H1 (cell line): ENCODE measurements at regions of chr10 and their contacts with region 1.

Region 1: DNA sequence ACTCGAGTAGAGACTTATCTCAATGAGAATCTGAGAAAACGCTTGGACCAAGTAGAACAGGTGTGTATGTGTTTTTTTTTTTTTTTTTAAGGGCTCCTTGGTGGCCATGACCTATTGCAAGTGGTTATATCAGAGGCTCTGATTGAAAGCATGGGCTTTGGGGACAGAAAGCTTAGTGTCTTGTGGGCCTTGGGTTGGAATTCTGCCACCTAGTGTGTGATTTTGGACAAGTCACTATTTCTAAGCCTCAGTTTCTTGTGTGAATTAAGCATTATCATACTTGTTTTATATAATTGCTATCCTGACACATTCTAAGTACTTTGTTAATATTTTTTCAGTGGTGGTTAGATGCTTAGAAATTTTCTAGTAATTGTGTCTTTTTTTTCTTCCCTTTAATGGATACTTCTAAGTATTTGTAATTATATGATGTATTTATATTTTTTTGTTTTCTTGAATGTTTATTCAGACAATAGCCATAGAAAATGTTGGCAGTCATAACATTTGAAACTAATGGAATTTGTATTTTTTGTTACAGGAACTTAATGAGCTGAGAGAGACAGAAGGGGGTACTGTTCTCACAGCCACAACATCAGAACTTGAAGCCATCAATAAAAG is 33.1 kb downstream of the SMC3 start:
- DNase-seq: peak in 1 of 2 experiments; percentile 27
- H3K4me3 ChIP-seq: no peak overlapping the region
- H3K27ac ChIP-seq: no peak overlapping the region
- H3K4me1 ChIP-seq: no peaks in the 10 kb centered on the region
- H3K27me3 ChIP-seq: no peaks in the 10 kb centered on the region
- CTCF ChIP-seq: peak in 2 of 3 experiments; percentile 50 to 51; a peak in 3 of 4 replicates
- EP300 ChIP-seq: no peak
- POLR2A ChIP-seq: no peak
- RAD21 ChIP-seq: peak; percentile 51 to 54

Region 2: GRCh38 chr10:110584006-110584405 is 16.6 kb before region 1 on chr10:
- CTCF ChIA-PET with region 1: interaction called, 50 read pairs
- POLR2A ChIA-PET with region 1: interaction called, 9 read pairs
- DNase-seq: no peak
- H3K4me3 ChIP-seq: no peak overlapping the region
- H3K27ac ChIP-seq: no peak overlapping the region
- H3K4me1 ChIP-seq: no peaks in the 10 kb centered on the region
- H3K27me3 ChIP-seq: no peaks in the 10 kb centered on the region
- CTCF ChIP-seq: no peak
- EP300 ChIP-seq: no peak
- POLR2A ChIP-seq: no peak
- RAD21 ChIP-seq: no peak

Region 3: GRCh38 chr10:110754375-110755105 is 153.9 kb after region 1 on chr10:
- CTCF ChIA-PET with region 1: no interaction called
- POLR2A ChIA-PET with region 1: no interaction called
- DNase-seq: no peak
- H3K4me3 ChIP-seq: no peak overlapping the region
- H3K27ac ChIP-seq: no peak overlapping the region
- H3K4me1 ChIP-seq: no peaks in the 10 kb centered on the region
- H3K27me3 ChIP-seq: no peaks in the 10 kb centered on the region
- CTCF ChIP-seq: no peak
- EP300 ChIP-seq: no peak
- POLR2A ChIP-seq: no peak
- RAD21 ChIP-seq: no peak